ENCODE measurements at regions of chr12 and their contacts with region 1.

Region 1: DNA sequence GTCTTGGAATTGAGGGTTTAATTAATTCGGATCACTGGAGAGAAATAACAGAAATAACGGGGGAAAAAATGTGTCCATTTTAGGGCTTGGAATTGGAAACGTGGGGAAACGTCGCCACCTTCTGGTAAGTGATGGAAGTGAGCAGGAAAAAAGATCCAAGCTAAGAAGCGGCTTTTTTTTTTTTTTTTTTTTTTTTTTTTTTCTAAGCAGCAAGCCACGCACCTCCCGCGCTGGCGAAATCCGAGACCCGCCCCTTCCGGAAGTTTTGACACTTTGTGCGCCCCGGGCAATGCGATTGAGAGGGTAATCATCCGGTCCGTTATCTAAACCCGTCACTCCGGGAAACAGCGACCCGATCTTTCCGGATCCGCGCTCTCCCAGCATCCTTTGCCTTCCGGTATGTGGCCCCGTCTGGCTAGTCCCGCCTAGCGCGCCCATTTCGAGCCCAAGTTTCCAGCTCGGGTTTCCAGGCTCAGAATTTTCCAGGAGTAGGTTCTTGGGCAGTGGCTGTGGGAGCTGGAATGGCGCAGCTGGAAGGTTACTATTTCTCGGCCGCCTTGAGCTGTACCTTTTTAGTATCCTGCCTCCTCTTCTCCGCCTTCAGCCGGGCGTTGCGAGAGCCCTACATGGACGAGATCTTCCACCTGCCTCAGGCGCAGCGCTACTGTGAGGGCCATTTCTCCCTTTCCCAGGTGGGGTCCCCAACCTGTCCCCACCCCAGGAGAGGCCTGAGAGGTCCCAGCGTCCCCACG is at the start of gene ALG10:
- DNase-seq: peak; percentile 98
- H3K4me3 Mint-ChIP-seq: peak within 1 kb of the TSS; percentile 96
- H3K27ac Mint-ChIP-seq: peak within 1 kb of the TSS; percentile 95
- H3K4me1 Mint-ChIP-seq: peaks cover 18% of the 10 kb centered on the region
- H3K27me3 Mint-ChIP-seq: no peaks in the 10 kb centered on the region
- total RNA-seq, gene ALG10: 21.6 to 23.9 TPM

Region 2: GRCh38 chr12:32365473-32366064 is 1656.7 kb before region 1 on chr12:
- CTCF ChIA-PET with region 1: no interaction called
- intact Hi-C with region 1: loop called (anchors 1 kb)
- DNase-seq: peak; percentile 69
- H3K4me3 Mint-ChIP-seq: no peak overlapping the region
- H3K27ac Mint-ChIP-seq: no peak overlapping the region
- H3K4me1 Mint-ChIP-seq: no peaks in the 10 kb centered on the region
- H3K27me3 Mint-ChIP-seq: no peaks in the 10 kb centered on the region

Region 3: DNA sequence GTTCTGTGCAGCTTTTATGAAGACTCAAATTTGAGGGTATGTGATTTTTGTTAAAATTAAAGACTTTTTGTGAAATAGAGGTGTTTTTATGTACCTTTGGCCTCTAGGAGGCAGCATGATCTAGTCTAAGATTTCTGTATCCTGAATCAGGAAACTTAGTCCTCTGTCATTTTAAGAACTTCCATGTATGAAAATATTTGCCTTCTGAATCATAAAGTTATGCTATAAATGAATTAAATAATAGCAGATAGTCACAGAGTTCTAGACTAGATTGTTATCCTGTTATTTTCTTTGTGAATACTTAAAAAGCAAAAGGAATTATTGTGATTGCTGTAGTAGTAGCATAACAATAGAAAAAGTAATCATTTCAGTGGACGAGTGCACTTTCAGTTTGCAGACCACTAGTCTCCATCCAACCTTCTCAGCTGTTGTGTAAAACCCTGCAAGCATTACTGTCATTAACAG is 1566.6 kb before region 1 on chr12:
- CTCF ChIA-PET with region 1: no interaction called
- intact Hi-C with region 1: loop called (anchors 1 kb)
- DNase-seq: peak; percentile 13
- H3K4me3 Mint-ChIP-seq: no peak overlapping the region
- H3K27ac Mint-ChIP-seq: no peak overlapping the region
- H3K4me1 Mint-ChIP-seq: no peaks in the 10 kb centered on the region
- H3K27me3 Mint-ChIP-seq: no peaks in the 10 kb centered on the region

Region 4: DNA sequence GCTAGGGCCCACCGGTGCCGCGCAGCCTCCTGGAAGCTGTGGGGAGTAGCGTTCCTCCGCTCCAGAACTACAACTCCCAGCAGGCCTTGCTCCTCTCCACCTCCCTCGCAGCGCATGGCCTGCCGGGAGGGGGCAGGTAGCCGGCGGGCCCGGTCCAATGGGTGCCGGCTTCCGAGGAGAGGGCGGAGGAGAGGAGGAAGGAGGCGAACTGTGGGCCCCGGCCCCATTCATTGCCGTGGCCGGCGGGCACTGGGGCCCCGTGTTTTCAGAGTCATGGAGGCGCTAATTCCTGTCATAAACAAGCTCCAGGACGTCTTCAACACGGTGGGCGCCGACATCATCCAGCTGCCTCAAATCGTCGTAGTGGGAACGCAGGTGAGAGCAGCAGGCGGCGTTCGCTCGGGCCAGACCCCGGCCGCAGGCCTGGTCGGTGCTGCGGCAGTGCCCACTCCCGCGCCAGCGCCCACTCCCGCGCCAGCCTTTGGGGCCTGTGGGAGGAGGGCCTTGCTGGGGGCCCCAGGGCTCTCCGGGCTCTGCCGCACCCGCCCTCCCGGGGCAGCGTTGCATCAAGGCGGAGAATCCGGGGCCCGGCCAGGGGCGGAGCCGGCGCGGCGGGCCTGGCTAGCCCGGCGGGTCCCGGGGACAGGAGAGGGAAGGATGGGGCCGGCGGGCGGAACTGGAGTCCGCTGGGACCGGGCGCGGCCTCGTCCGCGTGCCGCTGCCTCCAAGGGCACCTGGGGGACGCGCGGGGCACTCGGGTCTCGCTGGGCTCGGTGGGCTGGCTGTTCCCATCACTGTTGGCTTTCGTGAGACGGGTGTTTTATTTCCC is 1343.0 kb before region 1 on chr12 and contains the start of gene DNM1L:
- CTCF ChIA-PET with region 1: no interaction called
- intact Hi-C with region 1: loop called (anchors 1 kb)
- DNase-seq: peak; percentile 94
- H3K4me3 Mint-ChIP-seq: peak within 1 kb of the TSS; percentile 81
- H3K27ac Mint-ChIP-seq: peak within 1 kb of the TSS; percentile 82
- H3K4me1 Mint-ChIP-seq: peaks cover 24% of the 10 kb centered on the region
- H3K27me3 Mint-ChIP-seq: no peaks in the 10 kb centered on the region
- total RNA-seq, gene DNM1L: 54.4 to 61.5 TPM

Region 5: DNA sequence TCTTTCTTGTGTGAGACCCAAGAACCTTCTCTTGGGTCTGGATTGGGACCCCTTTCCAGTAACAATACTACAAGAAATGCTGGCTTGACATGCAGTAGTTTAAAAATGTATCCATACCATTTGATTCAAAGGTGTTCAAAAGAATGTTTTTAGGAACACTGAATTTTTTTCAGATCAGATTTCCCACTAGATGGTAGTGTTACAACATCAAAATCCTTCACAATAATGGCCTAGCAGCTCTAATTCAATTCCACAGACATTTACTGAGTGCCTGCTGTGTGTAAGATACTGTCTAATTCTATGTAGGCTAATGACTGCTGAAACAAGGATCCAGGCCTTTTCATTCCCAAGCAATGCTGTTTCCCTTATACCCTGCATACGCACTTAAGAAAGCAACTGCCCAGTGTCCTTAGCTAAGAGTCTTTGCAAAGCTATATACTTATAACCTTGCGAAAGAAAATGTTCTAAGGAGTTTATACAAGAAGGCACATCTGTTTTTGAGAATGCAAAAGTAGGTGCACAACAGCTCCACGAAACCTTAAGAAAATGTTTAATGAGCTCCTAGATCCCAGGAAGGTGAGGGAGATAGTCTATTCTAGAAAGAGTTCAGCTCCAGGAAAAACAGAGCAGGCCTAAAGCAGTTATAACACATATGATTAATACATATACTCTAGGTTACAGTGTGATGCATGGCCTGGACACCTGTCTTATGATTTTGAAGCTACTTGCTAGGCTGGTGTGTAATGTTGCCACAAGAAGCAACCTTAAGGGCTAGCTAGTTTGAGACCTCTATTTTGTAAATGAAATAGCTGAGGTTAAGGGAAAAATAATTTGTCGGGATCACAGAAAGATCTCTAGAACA is 1074.8 kb before region 1 on chr12:
- CTCF ChIA-PET with region 1: no interaction called
- intact Hi-C with region 1: loop called (anchors 1 kb)
- DNase-seq: no peak
- H3K4me3 Mint-ChIP-seq: no peak overlapping the region
- H3K27ac Mint-ChIP-seq: no peak overlapping the region
- H3K4me1 Mint-ChIP-seq: no peaks in the 10 kb centered on the region
- H3K27me3 Mint-ChIP-seq: peaks cover 4% of the 10 kb centered on the region

Measured in activated naive CD4-positive, alpha-beta T cell treated with anti-CD3 and anti-CD28 coated beads for 36 hours (primary cell).